ENCODE measurements at regions of chr2 and their contacts with region 1.

Region 1: GRCh38 chr2:204681412-204681811 is 136.1 kb downstream of the PARD3B start:
- DNase-seq: no peak
- ATAC-seq: no peak
- H3K4me3 ChIP-seq: no peak overlapping the region
- H3K27ac ChIP-seq: no peak overlapping the region
- H3K4me1 ChIP-seq: peaks cover 10% of the 10 kb centered on the region
- H3K27me3 ChIP-seq: no peaks in the 10 kb centered on the region
- CTCF ChIP-seq: no peak
- EP300 ChIP-seq: no peak
- POLR2A ChIP-seq: no peak
- RAD21 ChIP-seq: no peak

Region 2: DNA sequence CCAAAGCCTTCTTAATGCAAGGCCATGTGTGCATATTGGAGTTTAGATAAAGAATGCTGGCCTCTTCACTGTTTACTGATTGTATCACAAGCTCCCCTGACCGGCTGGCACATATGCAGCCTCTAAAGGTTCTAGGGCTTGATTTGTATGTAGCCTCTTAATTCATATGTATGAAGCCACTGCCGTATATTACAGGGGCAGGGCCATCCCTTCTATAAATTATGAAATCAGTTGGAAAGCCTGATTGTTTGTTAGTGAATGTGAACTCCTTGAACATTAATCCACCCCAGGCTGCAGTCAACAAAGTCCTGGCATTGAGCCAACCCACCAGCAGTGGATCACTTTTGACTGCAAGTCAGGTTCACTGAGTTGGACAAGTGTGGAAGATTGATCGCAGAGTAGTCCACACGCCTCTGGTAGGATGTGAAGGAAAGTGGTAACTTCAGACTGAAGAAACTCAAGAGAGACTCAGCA is 197.8 kb before region 1 on chr2:
- CTCF ChIA-PET with region 1: no interaction called
- POLR2A ChIA-PET with region 1: no interaction called
- in situ Hi-C with region 1: no loop called
- intact Hi-C with region 1: loop called (anchors 10 kb)
- DNase-seq: peak; percentile 16
- ATAC-seq: peak; percentile 77
- H3K4me3 ChIP-seq: no peak overlapping the region
- H3K27ac ChIP-seq: no peak overlapping the region
- H3K4me1 ChIP-seq: peaks cover 10% of the 10 kb centered on the region
- H3K27me3 ChIP-seq: no peaks in the 10 kb centered on the region
- CTCF ChIP-seq: no peak
- EP300 ChIP-seq: no peak
- POLR2A ChIP-seq: no peak
- RAD21 ChIP-seq: no peak

Region 3: GRCh38 chr2:205002390-205002789 is 321.0 kb after region 1 on chr2:
- CTCF ChIA-PET with region 1: no interaction called
- POLR2A ChIA-PET with region 1: no interaction called
- in situ Hi-C with region 1: no loop called
- intact Hi-C with region 1: no loop called
- DNase-seq: no peak
- ATAC-seq: no peak
- H3K4me3 ChIP-seq: no peak overlapping the region
- H3K27ac ChIP-seq: no peak overlapping the region
- H3K4me1 ChIP-seq: no peaks in the 10 kb centered on the region
- H3K27me3 ChIP-seq: no peaks in the 10 kb centered on the region
- CTCF ChIP-seq: no peak
- EP300 ChIP-seq: no peak
- POLR2A ChIP-seq: no peak
- RAD21 ChIP-seq: no peak

Measured in HepG2 (cell line).